Lower leg skin (tissue), 4 donors: ENCODE measurements at regions of chr1 and their contacts with region 1.

Region 1: DNA sequence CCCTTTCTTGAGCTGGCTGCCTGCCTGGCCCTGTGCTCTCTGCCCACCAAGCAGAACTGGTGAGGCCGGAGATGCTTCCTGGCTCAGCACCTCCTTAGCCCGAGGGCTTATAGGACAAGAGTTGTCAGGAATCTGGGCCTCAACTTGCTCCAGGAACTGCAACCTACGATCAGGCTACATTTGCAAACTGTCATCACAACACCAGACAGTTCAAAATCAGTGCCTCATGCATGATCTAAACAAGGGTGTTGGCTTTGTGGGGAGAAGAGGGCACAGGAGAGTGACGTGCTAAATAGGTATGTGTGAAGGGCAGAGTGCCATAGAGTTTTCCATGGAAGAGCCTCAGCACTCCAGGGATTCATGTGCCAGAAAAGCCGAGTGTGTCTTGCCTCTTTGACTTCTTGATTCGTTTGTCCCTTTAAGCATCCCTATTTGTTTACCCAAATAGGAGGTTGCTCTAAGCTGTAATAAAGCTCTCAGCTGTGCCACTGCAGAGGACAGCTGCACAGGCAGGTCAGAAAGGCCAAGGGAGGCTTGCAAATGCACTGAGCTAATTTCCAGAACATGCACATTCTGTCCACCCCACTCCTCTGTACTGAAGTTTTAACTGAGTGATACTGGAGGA is 30.2 kb upstream of the NEK2 start:
- DNase-seq: no peak
- H3K4me3 ChIP-seq: no peak overlapping the region
- CTCF ChIP-seq: no peak
- POLR2A ChIP-seq: no peak

Region 2: DNA sequence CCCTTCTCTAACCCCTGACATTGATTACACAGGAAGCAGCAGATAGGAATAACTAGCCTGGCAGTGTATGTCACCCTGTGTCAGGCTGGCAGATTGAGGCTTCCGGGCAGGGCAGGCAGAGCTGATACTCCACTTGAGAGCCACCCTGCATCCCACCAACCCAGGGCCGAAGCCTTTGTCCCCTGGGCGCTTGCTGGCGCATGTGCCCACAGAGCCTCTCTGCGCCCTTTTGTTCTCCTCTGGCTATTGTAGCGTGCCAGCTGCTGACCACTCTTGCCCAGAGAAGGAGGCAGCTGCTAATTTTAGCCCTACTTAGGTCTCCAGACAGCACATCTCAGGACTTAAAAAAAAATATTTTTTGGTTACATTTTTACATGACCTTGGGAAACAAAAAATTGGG is 1071.9 kb before region 1 on chr1:
- intact Hi-C with region 1: loop called (anchors 10 kb)
- DNase-seq: no peak
- H3K4me3 ChIP-seq: no peak overlapping the region
- CTCF ChIP-seq: no peak
- POLR2A ChIP-seq: no peak

Region 3: GRCh38 chr1:211944733-211945500 is 239.3 kb after region 1 on chr1:
- intact Hi-C with region 1: loop called (anchors 5 kb)
- DNase-seq: peak in 1 of 2 donors; percentile 38
- H3K4me3 ChIP-seq: no peak overlapping the region
- CTCF ChIP-seq: peak in 1 of 3 donors; percentile 24
- POLR2A ChIP-seq: no peak